ENCODE measurements at regions of chr14 and their contacts with region 1.

Region 1: GRCh38 chr14:51776102-51776894 is 84.1 kb upstream of the GNG2 start:
- DNase-seq: peak; percentile 80
- H3K4me3 ChIP-seq: no peak overlapping the region
- H3K27ac ChIP-seq: no peak overlapping the region
- H3K4me1 ChIP-seq: no peaks in the 10 kb centered on the region
- H3K27me3 ChIP-seq: no peaks in the 10 kb centered on the region
- CTCF ChIP-seq: peak; percentile 51 to 67 (median 56)
- POLR2A ChIP-seq: no peak

Region 2: DNA sequence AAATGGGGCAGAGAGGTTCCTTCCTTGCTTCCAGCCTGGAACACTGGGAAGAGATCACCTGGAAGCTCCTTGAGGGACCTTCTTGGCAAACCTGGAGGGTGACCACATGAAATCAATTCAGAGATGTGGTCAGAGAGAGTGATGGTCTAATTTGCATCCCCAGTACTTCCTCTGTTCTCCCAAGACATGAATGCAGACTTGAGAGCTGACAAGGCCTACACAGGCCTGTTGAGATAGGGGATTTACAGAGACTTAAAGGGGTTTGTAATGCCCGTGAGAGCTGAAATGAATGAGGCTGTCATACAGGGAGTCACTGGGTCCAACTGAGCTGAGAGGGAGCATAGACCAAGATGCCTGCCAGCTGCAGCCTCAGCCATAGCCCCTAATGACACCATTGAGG is 491.2 kb before region 1 on chr14:
- intact Hi-C with region 1: loop called (anchors 5 kb)
- DNase-seq: no peak
- H3K4me3 ChIP-seq: no peak overlapping the region
- H3K27ac ChIP-seq: no peak overlapping the region
- H3K4me1 ChIP-seq: no peaks in the 10 kb centered on the region
- H3K27me3 ChIP-seq: no peaks in the 10 kb centered on the region
- CTCF ChIP-seq: no peak
- POLR2A ChIP-seq: no peak

Region 3: DNA sequence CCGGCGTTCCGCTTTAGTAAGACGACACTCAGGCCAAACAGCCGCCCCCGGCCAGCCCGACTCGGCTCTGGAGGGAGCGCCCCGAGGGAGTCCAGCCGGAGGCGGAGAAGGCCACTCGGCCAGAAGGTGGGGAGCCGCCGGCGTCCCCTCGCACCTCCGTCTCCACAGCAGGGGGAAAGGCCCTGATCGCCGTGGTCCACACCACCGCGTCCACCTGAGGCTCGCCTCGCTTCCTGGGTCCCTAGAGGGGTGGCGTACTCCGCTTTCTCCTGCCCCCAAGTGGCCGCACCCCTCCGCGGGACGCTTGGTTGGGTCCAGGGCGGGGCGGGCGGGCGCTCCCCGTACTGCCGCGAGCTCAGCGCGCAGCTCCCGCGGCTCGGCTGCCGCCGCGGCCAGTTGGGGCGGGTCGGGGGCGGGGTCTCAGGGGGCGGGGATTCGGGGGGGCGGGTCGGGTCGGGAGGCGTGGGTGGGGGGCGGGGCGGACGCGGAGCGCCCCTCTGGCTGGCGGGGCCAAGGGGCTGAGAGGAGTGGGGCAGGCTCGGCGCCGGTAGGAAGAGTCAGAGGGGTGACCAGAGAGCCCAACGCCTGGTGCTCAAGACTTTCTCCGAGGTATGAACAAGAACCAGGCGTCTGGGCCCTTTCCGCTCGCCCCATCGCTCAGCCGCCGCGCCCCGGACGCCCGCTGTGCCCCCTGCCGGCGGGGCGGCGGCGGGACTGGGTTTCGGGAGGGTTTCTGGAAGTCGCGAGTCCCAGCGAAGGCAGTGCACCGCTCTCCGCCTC is 124.7 kb before region 1 on chr14 and contains the start of gene FRMD6:
- intact Hi-C with region 1: loop called (anchors 10 kb)
- DNase-seq: peak; percentile 87
- H3K4me3 ChIP-seq: peak within 1 kb of the TSS; percentile 72 to 92
- H3K27ac ChIP-seq: peak within 1 kb of the TSS; percentile 93 to 96
- H3K4me1 ChIP-seq: peaks cover 9% of the 10 kb centered on the region
- H3K27me3 ChIP-seq: no peaks in the 10 kb centered on the region
- CTCF ChIP-seq: peak; percentile 58 to 84 (median 78)
- POLR2A ChIP-seq: no peak
- total RNA-seq, gene FRMD6: 59.2 to 71.3 TPM

Measured in testis (tissue), 5 donors.